ENCODE measurements at regions of chr10 and their contacts with region 1.

Region 1: DNA sequence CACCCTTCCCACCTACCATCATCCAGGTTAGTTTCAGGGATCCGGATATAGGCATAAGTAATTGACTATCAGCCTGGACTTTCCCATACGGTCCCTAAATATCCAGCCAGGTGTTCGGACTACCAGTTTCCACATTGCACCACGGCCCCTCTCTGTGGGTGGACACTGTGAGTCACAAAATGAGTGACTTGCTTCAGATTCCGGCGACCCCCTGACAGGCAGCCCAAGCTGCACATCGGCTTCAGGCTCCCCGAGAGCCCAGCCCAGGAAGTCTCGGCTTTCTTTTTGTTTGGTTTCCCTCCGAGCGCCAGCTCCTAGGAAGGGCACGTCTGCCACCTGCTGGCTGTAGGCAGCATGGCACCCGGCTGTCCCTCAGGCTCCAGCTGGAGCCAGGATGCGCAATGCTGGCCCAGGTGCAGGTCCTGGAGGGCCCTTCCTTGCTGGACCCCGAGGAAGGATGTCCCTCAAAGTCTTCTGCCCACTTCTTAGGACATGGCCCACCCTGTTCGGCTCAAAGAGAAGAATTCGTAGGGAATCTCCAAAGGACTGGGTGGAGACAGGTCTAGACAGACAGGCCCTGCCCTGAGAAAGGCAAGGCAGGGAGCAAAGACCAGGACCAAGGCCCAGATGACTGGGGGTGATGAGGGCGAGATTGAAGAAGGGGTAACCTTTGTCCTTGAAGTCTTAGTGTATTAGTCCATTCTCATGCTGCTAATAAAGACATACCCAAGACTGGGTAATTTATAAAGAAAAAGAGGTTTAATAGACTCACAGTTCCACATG is 10.6 kb downstream of the HABP2 start:
- DNase-seq: no peak
- H3K4me3 ChIP-seq: peak overlapping the region; percentile 35
- H3K27me3 ChIP-seq: no peaks in the 10 kb centered on the region
- CTCF ChIP-seq: peak; percentile 99

Region 2: GRCh38 chr10:112471878-112472487 is 1091.5 kb before region 1 on chr10:
- CTCF ChIA-PET with region 1: interaction called, 14 read pairs
- POLR2A ChIA-PET with region 1: no interaction called
- DNase-seq: no peak
- H3K4me3 ChIP-seq: no peak overlapping the region
- H3K27me3 ChIP-seq: no peaks in the 10 kb centered on the region
- CTCF ChIP-seq: peak; percentile 66

Region 3: GRCh38 chr10:113441220-113441619 is 122.3 kb before region 1 on chr10:
- CTCF ChIA-PET with region 1: interaction called, 16 read pairs
- POLR2A ChIA-PET with region 1: no interaction called
- DNase-seq: no peak
- H3K4me3 ChIP-seq: no peak overlapping the region
- H3K27me3 ChIP-seq: peaks cover 6% of the 10 kb centered on the region
- CTCF ChIP-seq: no peak; the same call in 1 of the 2 replicates

Region 4: DNA sequence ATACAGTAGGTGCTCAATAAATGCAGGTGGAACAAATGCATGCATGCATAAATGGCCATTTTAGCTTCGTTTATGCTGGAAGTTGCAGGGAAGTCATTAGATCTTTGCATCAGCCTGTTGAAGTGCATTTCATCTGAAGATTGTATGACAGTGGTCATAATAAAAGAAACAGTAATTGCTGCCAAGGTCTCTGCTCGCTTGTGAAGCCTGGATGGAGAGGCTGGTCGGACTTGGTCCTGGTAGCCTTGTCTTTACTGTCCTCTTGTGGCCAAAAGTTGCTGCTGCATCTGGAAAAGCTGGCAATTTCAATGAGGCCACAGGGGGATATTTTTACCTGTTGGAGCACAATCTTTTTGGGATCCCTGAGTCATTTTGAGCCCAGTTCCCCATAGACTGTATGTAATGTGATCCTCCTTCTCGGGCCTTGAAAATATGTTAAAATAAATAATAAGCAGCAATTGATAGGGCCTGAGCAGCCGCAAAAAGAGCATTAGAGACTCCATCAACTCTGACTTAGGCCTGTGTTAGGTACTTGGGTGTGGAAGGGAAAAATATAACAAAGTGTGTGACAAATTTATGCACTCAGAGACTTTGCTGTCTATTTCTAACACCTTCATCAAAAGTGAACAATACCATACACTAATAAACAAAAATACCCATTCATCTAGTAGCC is 42.2 kb before region 1 on chr10:
- CTCF ChIA-PET with region 1: interaction called, 11 read pairs
- POLR2A ChIA-PET with region 1: no interaction called
- DNase-seq: no peak
- H3K4me3 ChIP-seq: no peak overlapping the region
- H3K27me3 ChIP-seq: no peaks in the 10 kb centered on the region; the same call in 1 of the 2 replicates
- CTCF ChIP-seq: peak; percentile 99

Region 5: DNA sequence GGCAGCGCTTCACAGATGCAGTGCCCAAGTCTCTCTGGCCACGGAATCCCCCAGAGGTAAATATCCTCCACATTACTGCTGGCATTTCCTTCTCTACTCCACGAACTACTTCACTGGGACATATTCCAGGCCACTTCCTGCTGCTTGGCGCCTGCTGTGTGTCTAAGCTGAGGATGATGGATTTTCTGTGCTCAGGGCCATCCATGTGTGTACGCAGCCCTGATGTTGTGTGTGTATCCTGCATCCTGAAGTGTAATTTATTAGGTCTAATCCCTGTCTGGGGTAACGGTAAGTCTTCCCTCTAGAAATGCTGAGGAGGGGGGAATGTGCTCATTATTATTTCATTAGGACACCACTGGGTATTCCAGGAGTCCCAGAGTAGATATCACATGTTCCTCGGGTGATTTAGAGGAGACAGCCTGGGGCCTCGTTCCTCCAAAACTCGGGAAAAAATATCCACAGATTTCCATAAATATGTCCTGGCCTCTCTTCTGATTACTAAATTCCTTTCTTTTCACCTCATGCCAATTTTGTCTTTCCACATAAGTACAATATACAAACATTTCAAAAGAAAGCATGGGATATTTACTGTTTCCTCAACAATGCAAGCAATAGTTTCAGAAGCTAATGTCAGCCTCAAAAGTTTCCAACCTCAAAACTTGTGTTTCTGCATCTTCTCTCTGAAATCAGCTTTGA is 36.1 kb before region 1 on chr10:
- CTCF ChIA-PET with region 1: interaction called, 11 read pairs
- POLR2A ChIA-PET with region 1: no interaction called
- DNase-seq: no peak
- H3K4me3 ChIP-seq: no peak overlapping the region
- H3K27me3 ChIP-seq: no peaks in the 10 kb centered on the region; the same call in 1 of the 2 replicates
- CTCF ChIP-seq: no peak

Region 6: GRCh38 chr10:113540845-113541548 is 22.5 kb before region 1 on chr10:
- CTCF ChIA-PET with region 1: interaction called, 13 read pairs
- POLR2A ChIA-PET with region 1: no interaction called
- DNase-seq: no peak
- H3K4me3 ChIP-seq: no peak overlapping the region
- H3K27me3 ChIP-seq: no peaks in the 10 kb centered on the region
- CTCF ChIP-seq: no peak

Region 7: DNA sequence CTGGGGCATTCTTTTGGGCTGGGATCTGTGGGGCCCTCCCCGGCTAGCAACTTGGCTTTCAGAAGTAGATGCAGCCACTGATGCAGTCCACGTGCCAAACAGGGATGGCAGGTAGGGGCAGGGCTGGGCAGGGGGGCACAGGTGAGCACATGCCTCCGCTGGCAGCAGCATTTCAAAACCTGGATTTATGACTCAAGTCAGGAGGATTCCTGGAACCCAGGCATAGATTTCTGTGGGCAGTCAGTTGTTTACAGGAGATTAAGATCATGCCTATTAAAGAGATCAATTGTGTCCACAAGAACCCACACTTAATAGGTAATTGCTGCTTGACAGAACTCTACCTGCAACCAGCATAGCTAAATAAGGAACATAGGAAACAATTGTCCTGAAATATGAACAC is 11.5 kb before region 1 on chr10:
- CTCF ChIA-PET with region 1: interaction called, 30 read pairs
- POLR2A ChIA-PET with region 1: no interaction called
- DNase-seq: no peak
- H3K4me3 ChIP-seq: no peak overlapping the region
- H3K27me3 ChIP-seq: peaks cover 2% of the 10 kb centered on the region; the same call in 1 of the 2 replicates
- CTCF ChIP-seq: no peak